GM10248 (cell line): ENCODE measurements at regions of chr6 and their contacts with region 1.

Region 1: DNA sequence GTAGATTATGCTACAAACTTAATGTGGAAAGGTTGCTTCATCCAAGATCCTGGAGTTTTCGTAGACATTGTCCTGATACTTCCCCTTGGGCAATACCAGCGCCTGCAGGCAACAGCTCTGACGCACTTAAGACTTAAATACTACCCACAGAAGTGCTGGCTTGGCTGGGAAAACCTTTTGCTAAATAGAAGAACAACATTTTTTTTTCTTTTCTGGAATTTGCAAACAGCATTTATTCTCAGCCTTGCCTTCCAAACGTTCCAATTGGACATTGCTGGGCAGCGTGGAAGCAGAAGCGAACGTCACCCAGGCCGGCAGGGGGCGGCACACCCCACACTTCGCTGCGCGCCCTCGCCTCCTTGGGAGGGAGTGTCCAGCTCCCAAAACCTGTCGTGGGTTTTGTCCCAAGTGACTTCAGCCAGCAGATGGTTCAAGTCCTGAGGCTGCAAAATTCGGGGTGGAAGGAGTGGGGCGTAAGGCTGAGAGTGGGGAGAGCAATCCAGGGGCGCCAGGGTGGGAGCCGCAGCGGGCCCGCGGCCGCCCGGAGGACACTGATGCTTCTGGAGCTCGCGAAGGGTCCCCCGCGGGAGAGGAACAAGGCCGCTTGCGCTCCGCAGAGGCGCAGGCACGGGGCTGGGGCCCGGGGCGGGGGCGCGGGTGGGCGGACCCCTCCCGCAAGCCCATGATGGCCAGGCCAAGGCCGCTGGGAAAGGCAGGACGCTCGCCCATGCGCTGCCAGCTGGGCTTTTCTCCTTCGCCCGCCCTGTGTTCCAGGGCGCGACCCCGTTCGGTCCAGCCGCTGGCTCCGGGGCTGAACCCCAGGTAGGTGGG is 60.8 kb upstream of the MAP3K4 start:
- DNase-seq: peak; percentile 81
- CTCF ChIP-seq: peak; percentile 92

Region 2: DNA sequence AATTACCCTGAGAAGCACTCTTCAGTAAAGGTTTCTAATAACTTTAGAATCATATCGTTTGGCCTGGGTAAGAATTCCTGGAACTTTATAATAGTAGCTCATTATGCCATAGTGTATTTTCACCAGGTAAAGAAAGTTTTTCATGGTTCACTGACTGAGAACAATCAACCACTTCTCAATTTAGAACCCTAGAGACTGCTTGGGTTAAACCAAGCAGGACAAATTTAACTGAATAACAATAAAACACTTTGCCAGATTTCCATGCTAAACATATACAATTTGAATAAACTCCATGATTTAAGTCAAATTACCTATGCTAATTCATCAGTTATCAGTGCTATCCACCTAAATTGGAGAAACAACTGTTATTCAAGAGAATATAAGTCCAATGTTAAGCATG is 129.3 kb before region 1 on chr6:
- CTCF ChIA-PET with region 1: no interaction called
- POLR2A ChIA-PET with region 1: no interaction called
- DNase-seq: no peak
- CTCF ChIP-seq: no peak

Region 3: GRCh38 chr6:160919723-160920440 is 10.9 kb before region 1 on chr6:
- CTCF ChIA-PET with region 1: interaction called, 13 read pairs
- POLR2A ChIA-PET with region 1: no interaction called
- DNase-seq: no peak
- CTCF ChIP-seq: no peak

Region 4: DNA sequence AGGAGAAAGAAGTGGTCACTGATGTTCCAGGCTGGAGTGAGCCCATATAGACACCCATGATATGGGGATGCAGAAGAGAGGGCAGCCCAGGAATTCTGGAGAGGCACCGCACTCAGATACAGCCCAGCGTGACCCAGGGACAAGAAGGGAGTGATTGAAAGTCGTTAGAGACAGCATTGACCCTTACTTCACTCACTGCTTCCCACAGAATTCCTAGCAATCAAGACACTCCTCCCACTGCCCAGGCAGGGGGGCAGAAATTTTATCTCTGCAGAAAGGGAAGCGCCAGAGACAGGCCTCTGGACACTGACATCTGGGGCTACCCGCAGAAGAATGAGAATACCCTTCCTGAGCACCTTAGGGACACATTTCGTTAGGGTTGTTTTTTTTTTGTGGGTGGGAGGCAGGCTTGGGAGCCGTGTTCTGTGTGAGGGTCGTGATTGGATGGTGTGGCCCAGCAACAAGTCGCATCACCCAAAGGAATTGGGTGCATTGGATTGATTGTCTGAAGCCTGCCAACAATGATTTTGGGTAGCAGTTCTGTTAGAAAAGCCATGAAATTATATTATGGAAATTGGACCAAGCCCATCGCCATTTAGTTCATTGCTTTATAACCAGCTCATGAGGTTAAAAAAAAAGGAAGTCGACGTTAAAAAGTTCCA is 14.9 kb after region 1 on chr6:
- CTCF ChIA-PET with region 1: interaction called, 16 read pairs
- POLR2A ChIA-PET with region 1: no interaction called
- DNase-seq: no peak
- CTCF ChIP-seq: no peak

Region 5: DNA sequence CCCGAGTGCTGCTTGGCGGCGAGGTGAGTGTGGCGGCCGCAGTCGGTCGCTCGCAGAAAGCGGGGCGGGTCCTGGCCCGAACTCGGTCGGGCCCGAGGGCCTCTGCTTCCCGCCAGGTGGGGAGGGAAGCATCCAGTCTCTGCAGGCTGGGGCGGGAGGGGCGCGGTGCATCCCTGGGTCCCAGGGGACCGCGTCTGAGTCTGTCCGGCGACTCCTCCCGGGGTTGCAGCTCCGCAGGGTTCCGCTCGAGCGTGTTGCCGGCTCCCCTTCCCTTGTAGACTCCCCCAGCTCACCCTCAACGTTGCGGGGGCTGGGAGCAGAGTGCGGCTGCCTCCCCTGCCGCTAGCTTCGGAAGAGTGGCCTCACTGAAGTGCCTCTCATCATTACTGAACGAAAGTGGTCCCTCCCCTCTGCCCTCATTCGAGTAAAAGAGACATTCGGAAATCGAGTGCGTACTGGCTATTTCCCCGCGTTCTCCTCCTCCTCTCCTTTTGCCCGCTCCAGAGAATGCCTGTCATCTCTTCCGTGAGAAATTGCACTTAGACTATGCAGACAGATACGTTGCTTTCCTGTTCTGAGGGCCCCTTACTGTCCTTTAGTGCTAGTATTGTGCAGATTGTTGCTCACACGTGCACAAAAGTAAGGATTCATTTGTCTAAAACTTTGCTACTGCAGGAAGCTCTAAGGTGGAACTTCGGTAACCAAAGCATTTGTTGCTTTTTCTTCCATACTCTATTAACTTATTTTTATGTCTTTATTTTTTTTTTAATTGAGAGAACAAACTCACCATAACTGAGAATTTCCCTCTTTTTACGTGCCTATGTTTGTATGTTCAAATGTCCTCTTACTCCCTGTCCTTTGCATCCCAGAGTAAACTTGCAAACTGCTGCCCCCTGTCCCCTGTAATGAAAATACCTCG is 61.6 kb after region 1 on chr6:
- CTCF ChIA-PET with region 1: interaction called, 14 read pairs
- POLR2A ChIA-PET with region 1: no interaction called
- DNase-seq: peak; percentile 53
- CTCF ChIP-seq: peak; percentile 64

Region 6: GRCh38 chr6:161029195-161029809 is 98.5 kb after region 1 on chr6:
- CTCF ChIA-PET with region 1: interaction called, 10 read pairs
- POLR2A ChIA-PET with region 1: no interaction called
- DNase-seq: peak; percentile 52
- CTCF ChIP-seq: no peak

Region 7: DNA sequence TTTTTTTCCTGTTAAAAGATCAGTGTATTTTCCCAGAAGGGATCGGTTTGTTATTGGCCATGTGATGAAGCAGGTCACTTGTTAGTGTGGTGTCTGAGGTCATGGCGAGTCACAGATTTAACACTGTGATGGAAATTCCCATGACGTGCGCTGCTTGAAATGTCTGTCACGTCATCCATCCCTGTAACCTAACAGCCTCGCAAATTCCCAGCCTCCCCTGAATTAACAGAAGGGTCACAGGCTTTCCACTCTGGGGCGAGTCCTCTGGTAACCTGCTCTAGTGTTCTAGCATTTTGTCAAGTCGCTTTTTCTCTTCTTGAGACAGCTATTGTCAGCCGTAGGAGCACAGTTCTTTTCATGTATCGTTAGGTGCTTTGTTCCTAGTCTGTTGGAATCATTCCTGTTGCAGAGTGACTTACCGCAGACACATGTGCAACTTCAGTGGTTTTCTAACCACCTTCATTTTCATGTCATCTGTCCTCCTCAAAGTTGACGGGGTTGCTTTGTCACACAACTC is 198.0 kb after region 1 on chr6:
- CTCF ChIA-PET with region 1: no interaction called
- POLR2A ChIA-PET with region 1: no interaction called
- DNase-seq: no peak
- CTCF ChIP-seq: no peak

Region 8: DNA sequence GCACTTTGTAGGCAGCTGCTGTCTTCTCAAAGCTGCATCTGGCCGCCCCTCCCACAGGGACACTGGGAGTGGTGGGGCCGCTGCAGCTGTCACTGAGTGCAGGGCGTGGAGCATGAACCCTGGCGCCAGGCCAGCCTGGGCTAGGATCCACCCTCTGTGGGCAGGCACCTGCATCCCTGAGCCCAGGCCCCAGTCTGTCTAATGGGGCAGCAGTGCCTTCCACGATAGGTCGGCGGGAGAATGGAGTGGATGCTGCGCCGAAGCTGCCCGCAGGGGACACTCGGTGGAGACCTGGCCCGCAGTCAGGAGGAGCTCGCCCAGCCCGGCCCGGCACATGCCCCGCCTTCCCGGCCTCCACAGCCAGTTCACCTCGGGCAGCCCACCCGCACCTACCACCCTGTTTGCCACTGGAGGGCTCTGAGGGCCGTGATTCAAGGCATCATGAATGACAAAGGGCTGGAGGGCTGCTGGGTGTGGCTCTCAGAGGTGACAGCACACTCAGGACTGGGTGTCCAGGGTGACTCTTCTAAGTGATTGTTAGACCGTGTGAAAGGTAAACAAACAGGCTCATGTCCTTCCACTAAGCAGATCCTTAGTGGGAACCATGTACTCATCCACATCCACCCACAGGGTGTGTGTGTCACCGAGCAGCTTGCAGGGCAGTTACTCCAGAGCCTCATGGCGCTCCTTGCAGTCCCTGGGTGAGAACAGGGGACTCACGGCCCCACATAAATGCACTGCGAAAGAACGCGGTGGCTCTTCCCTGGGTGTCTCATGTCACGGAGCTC is 209.2 kb after region 1 on chr6:
- CTCF ChIA-PET with region 1: interaction called, 18 read pairs
- POLR2A ChIA-PET with region 1: no interaction called
- DNase-seq: no peak
- CTCF ChIP-seq: peak; percentile 35